ENCODE measurements at regions of chr1 and their contacts with region 1.

Region 1: DNA sequence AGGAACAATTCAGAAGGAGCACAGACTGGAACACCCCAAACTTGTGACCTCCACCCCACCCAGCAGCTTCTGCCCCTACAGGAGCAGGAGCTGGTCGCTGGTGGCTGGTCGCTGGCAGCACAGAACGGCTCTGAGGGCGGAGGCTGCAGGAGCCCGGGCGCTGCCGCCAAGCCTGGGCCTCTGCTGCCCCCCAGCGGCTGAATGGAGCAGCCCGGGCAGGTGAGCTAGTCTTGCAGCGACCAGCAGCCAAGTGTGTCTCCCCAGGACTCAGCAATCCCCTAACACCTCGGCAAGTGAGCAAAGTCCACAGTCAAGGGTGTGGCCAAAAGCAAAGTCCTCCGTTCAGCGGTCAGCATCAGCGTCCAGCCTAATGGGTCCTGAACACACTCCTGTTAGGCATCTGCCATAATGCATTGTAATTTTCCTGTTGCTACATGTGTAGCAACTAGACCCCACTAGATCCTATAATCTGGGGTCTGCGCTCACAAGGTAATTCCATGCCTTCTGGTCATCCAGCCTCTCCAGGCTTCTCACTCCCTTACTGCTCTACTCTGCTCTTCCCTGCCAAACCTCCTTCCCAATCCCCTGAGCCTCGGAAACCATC is 12.1 kb upstream of the GJB5 start:
- DNase-seq: peak; percentile 91
- H3K4me3 ChIP-seq: no peak overlapping the region; a peak in 1 of 4 replicates
- H3K27ac ChIP-seq: no peak overlapping the region
- H3K4me1 ChIP-seq: peaks cover 0 to 8% of the 10 kb centered on the region in 2 experiments; a peak in 1 of 4 replicates
- H3K27me3 ChIP-seq: no peaks in the 10 kb centered on the region
- CTCF ChIP-seq: peak; percentile 82
- EP300 ChIP-seq: no peak
- RAD21 ChIP-seq: peak; percentile 95

Region 2: GRCh38 chr1:33633019-33633801 is 1109.6 kb before region 1 on chr1:
- CTCF ChIA-PET with region 1: interaction called, 53 read pairs
- POLR2A ChIA-PET with region 1: no interaction called
- DNase-seq: peak; percentile 88
- H3K4me3 ChIP-seq: peak overlapping the region in 1 of 2 experiments; percentile 39; a peak in 1 of 4 replicates
- H3K27ac ChIP-seq: no peak overlapping the region
- H3K4me1 ChIP-seq: no peaks in the 10 kb centered on the region; a peak in 1 of 4 replicates
- H3K27me3 ChIP-seq: no peaks in the 10 kb centered on the region
- CTCF ChIP-seq: peak; percentile 95
- EP300 ChIP-seq: no peak
- RAD21 ChIP-seq: peak; percentile 83

Region 3: DNA sequence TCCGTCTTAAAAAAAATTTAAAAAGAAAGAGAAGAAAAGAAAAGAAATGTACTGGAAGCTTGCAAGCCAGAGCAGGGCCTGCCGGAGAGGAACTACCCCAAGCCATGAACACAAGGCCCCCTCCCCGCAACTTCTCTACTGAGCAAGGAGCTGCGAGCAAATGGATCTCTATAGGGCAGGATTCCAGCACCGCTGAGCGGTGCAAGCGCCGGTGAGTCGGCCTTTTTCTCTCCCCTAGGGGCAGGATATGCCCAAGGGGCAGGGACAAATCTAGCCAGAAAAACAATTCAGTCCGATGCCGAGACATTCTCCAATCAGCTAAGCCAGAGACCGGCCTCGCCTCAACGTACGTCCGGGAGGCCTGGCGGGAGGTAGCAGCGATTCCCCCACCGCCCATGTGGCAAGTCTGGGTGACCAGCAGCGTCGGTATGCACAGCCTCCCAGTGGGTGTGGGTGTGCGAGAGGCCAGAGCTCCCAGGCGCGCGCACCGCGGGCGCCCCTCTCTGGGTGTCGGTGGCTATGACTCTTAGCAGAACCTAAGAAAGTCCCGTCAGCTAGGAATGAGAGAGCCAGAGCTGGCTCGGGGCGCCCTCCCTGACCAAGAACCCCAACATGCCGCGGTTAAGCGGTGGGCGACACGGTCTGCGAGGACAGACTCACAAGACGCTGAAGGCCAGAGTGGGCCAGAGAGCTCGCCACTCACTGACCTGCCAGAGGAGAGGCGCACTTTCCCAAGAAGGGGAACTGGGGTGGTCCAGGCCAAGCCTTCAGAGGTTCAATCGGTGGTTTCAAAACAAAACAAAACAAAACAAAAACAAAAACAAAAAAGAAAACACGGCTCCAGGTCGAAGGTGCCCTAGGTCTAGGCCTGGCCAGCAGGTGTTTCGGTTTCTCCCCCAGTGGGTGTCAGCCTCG is 579.7 kb before region 1 on chr1:
- CTCF ChIA-PET with region 1: interaction called, 15 read pairs
- POLR2A ChIA-PET with region 1: no interaction called
- DNase-seq: peak; percentile 89
- H3K4me3 ChIP-seq: peak overlapping the region; percentile 24 to 53
- H3K27ac ChIP-seq: no peak overlapping the region
- H3K4me1 ChIP-seq: peaks cover 0 to 15% of the 10 kb centered on the region in 2 experiments; a peak in 1 of 4 replicates
- H3K27me3 ChIP-seq: no peaks in the 10 kb centered on the region
- CTCF ChIP-seq: peak; percentile 55
- EP300 ChIP-seq: no peak
- RAD21 ChIP-seq: peak; percentile 88

Region 4: DNA sequence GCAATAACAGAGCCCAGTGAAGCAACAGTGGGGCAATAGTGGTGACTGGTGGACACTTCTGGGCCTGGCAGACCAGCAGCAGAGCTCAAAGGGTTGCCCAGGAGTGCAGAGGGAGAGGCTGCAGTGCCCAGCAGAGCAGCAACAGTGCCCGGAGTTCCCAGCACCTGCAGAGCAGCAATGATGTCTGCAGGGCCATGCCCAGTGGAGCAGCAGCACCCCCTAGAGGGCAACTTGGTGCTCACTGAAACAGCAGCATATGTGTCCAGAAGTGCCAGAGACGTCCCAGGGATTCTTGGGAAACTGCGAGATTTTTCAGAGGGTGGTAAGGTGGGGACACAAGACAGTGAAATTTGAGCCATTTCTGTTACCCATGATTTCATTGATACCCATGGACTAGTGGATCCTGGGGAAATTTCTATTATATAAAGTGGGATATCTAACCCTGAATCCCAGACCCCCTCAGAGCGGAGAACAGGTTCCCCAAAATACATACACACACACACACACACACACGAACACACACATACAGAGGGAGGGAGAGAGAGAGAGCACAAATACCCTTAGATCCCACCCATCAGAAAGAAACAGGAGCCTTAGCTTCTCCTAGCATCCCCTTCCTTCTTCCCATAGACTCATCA is 144.8 kb before region 1 on chr1:
- CTCF ChIA-PET with region 1: interaction called, 22 read pairs
- POLR2A ChIA-PET with region 1: no interaction called
- DNase-seq: peak; percentile 75
- H3K4me3 ChIP-seq: peak overlapping the region in 1 of 2 experiments; percentile 52; a peak in 1 of 4 replicates
- H3K27ac ChIP-seq: no peak overlapping the region
- H3K4me1 ChIP-seq: no peaks in the 10 kb centered on the region
- H3K27me3 ChIP-seq: no peaks in the 10 kb centered on the region
- CTCF ChIP-seq: peak; percentile 32
- EP300 ChIP-seq: no peak
- RAD21 ChIP-seq: peak; percentile 91

Region 5: GRCh38 chr1:34690269-34690668 is 52.5 kb before region 1 on chr1:
- CTCF ChIA-PET with region 1: interaction called, 34 read pairs
- POLR2A ChIA-PET with region 1: no interaction called
- DNase-seq: no peak
- H3K4me3 ChIP-seq: no peak overlapping the region
- H3K27ac ChIP-seq: no peak overlapping the region
- H3K4me1 ChIP-seq: peaks cover 0 to 14% of the 10 kb centered on the region in 2 experiments; a peak in 1 of 4 replicates
- H3K27me3 ChIP-seq: no peaks in the 10 kb centered on the region
- CTCF ChIP-seq: no peak
- EP300 ChIP-seq: no peak
- RAD21 ChIP-seq: no peak

Region 6: DNA sequence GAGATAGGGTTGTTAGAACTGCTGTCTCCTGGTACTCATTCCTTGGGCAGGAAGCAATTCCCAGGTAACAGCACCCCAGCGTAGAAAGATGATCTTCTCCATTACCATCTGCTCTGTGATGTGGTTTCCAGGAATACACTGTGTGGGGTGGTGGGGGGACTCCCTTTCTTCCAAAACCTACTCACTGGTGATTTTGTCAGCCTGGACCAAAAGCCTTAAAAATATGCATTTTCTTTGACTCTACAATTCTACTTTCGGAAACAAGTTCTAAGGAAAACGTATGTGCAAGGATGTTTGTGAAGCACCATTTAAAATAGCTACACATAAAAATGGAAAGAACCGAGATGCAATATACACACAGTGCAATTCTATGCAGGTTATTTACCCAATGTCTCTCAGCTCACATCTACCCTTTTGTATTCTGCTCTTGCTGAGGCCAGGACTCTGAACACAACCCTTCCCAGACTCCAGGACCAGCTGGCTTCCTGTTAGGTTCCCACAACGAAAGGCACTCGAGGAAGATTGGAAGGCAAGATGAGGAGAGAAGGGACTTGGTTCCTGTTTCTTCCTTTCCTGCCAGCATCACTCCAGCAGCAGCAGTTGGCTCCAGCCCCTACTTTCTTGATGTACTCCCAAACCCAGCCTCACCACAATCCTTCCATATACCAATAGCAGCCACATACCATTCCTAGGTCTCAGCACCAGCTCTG is 21.0 kb before region 1 on chr1:
- CTCF ChIA-PET with region 1: interaction called, 32 read pairs
- POLR2A ChIA-PET with region 1: no interaction called
- DNase-seq: no peak
- H3K4me3 ChIP-seq: no peak overlapping the region
- H3K27ac ChIP-seq: no peak overlapping the region
- H3K4me1 ChIP-seq: peaks cover 0 to 14% of the 10 kb centered on the region in 2 experiments; a peak in 1 of 4 replicates
- H3K27me3 ChIP-seq: no peaks in the 10 kb centered on the region
- CTCF ChIP-seq: no peak
- EP300 ChIP-seq: no peak
- RAD21 ChIP-seq: no peak

Measured in SK-N-SH (cell line).